CD4-positive, alpha-beta memory T cell (primary cell): ENCODE measurements at regions of chr22 and their contacts with region 1.

Region 1: DNA sequence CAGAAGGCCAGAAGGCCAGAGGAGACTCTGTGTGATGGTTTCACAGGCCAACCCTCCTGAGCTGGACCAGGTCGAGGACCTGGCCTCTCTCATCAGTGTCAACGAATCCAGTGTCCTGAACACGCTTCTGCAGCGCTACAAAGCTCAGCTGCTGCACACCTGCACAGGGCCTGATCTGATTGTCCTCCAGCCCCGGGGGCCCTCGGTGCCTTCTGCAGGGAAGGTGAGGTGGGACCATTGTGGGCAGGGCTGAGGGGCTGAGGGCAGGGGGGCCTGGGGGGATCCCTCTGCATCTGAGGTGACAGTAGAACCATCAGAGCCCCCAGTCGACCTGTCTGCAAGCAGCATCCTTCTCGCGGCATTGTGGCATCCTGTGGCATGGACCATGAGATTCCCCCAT is 30.3 kb downstream of the MYO18B start:
- DNase-seq: no peak
- H3K4me3 ChIP-seq: no peak overlapping the region
- H3K4me3 Mint-ChIP-seq: no peak overlapping the region
- H3K27ac ChIP-seq: no peak overlapping the region
- H3K27ac Mint-ChIP-seq: peak overlapping the region in 1 of 7 donors; percentile 42
- H3K4me1 ChIP-seq: peaks cover 5% of the 10 kb centered on the region
- H3K4me1 Mint-ChIP-seq: peaks cover 5 to 8% (median 6%) of the 10 kb centered on the region in 4 donors
- H3K27me3 ChIP-seq: no peaks in the 10 kb centered on the region
- H3K27me3 Mint-ChIP-seq: peaks cover 0 to 6% of the 10 kb centered on the region in 2 donors

Region 2: DNA sequence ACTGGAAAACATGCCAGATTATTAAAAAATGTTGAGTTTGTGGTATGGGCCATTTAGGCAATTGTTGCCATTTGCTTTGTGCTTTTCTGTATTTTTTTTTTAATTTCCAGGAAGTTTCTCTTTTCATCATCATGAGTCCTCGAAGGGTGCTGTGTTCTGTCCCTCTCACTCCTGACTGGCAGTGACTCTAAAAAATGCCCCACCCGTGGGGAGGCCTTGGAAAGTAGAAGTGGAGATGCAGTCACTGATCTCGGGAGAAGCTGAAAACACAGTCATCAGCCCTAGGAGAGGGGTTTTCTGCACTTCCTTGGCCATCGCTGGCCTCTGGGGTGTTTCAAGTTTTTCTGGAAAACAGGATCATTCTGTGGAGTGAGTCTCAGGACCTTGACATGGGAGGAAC is 306.3 kb before region 1 on chr22:
- CTCF ChIA-PET with region 1: interaction called, 25 read pairs
- POLR2A ChIA-PET with region 1: no interaction called
- intact Hi-C with region 1: no loop called
- DNase-seq: no peak
- H3K4me3 ChIP-seq: no peak overlapping the region
- H3K4me3 Mint-ChIP-seq: no peak overlapping the region
- H3K27ac ChIP-seq: no peak overlapping the region
- H3K27ac Mint-ChIP-seq: peak overlapping the region in 1 of 7 donors; percentile 63
- H3K4me1 ChIP-seq: no peaks in the 10 kb centered on the region
- H3K4me1 Mint-ChIP-seq: peaks cover 0 to 7% (median 5%) of the 10 kb centered on the region in 4 donors
- H3K27me3 ChIP-seq: no peaks in the 10 kb centered on the region
- H3K27me3 Mint-ChIP-seq: no peaks in the 10 kb centered on the region